ENCODE measurements at regions of chr17 and their contacts with region 1.

Region 1: DNA sequence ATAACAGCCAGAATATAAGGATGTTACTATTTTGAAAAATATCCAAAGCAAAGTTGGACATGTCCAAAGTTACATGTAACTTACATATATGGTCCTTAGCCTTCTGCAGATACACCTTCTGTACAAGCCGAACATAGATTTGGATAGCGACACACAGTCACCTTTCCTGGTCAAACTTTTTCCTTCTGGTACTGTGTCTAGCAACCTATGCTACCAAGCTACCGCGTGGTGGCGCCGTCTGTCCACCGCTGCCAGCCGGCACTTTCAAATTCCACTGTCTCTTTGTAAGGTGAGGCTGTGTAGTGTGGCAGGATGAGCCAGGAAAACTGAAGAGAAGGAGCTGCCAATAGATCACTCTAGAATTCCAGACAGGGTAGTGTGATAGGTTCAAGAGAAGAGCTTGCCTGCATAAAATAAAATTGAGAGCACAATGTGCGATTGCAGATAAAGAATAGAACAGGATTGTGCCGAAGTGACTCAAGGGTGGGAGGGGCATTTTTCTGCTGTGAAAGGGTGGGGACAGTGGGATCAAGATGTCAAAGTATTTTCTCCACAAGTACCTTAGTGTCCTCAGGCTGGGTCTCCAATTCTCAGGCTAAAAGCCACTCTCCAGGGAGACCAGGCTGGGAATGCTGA is 366.9 kb downstream of the SLC39A11 start:
- DNase-seq: peak; percentile 71
- H3K4me3 Mint-ChIP-seq: no peak overlapping the region
- H3K27ac Mint-ChIP-seq: no peak overlapping the region
- H3K4me1 Mint-ChIP-seq: peaks cover 39% of the 10 kb centered on the region
- H3K27me3 Mint-ChIP-seq: no peaks in the 10 kb centered on the region

Region 2: GRCh38 chr17:72699545-72699944 is 26.0 kb before region 1 on chr17:
- CTCF ChIA-PET with region 1: interaction called, 12 read pairs
- POLR2A ChIA-PET with region 1: interaction called, 4 read pairs
- intact Hi-C with region 1: no loop called
- DNase-seq: no peak
- H3K4me3 Mint-ChIP-seq: no peak overlapping the region
- H3K27ac Mint-ChIP-seq: no peak overlapping the region
- H3K4me1 Mint-ChIP-seq: peaks cover 8% of the 10 kb centered on the region
- H3K27me3 Mint-ChIP-seq: no peaks in the 10 kb centered on the region

Region 3: DNA sequence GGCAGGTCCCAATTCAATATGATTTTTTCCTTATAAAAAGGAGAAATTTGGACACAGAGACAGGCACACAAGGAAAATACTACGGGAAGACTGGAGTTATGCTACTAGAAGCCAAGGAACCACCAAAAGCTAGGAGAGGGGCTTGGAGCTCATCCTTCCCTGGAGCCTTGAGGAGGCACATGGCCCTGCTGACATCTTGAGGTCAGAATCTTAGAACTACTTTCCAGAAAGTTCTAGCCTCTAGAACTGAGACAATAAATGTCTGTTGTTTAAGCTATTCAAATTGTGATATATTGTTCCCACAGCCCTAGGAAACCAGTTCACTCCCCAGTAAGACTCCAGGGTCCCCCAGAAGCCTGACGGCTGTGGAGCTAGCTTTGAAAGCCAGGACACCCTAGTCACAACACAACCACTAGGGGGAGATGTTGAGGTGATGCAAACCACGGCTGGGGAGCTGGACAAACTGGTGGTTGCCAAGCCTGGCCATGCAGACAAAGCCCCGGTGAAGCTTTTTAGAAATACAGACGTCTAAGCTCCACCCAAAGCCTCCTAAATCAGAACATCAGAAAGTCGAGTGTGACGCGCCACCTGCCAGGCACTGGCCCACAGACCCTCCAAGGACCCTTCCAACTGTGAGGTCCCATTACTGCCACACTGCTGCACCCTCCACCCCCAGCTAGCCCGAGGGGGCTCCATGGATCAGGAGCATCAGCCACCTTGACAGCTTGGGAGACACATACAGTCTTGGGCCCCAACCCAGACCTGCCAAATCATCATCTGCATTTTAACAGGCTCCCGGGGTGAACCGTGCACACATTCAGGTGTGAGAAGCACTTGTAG is 260.6 kb after region 1 on chr17:
- CTCF ChIA-PET with region 1: interaction called, 48 read pairs
- POLR2A ChIA-PET with region 1: no interaction called
- intact Hi-C with region 1: loop called (anchors 5 kb)
- DNase-seq: peak; percentile 69
- H3K4me3 Mint-ChIP-seq: no peak overlapping the region
- H3K27ac Mint-ChIP-seq: no peak overlapping the region
- H3K4me1 Mint-ChIP-seq: peaks cover 1% of the 10 kb centered on the region
- H3K27me3 Mint-ChIP-seq: no peaks in the 10 kb centered on the region

Region 4: GRCh38 chr17:73166731-73167581 is 441.4 kb after region 1 on chr17:
- CTCF ChIA-PET with region 1: interaction called, 16 read pairs
- POLR2A ChIA-PET with region 1: no interaction called
- intact Hi-C with region 1: no loop called
- DNase-seq: peak; percentile 31
- H3K4me3 Mint-ChIP-seq: peak overlapping the region; percentile 64
- H3K27ac Mint-ChIP-seq: no peak overlapping the region
- H3K4me1 Mint-ChIP-seq: peaks cover 30% of the 10 kb centered on the region
- H3K27me3 Mint-ChIP-seq: peaks cover 66% of the 10 kb centered on the region

Region 5: GRCh38 chr17:73255671-73256181 is 530.2 kb after region 1 on chr17:
- CTCF ChIA-PET with region 1: interaction called, 18 read pairs
- POLR2A ChIA-PET with region 1: no interaction called
- intact Hi-C with region 1: no loop called
- DNase-seq: peak; percentile 65
- H3K4me3 Mint-ChIP-seq: no peak overlapping the region
- H3K27ac Mint-ChIP-seq: no peak overlapping the region
- H3K4me1 Mint-ChIP-seq: peaks cover 3% of the 10 kb centered on the region
- H3K27me3 Mint-ChIP-seq: no peaks in the 10 kb centered on the region